Activated CD4-positive, alpha-beta T cell treated with anti-CD3 and anti-CD28 coated beads for 36 hours (primary cell): ENCODE measurements at regions of chr17 and their contacts with region 1.

Region 1: DNA sequence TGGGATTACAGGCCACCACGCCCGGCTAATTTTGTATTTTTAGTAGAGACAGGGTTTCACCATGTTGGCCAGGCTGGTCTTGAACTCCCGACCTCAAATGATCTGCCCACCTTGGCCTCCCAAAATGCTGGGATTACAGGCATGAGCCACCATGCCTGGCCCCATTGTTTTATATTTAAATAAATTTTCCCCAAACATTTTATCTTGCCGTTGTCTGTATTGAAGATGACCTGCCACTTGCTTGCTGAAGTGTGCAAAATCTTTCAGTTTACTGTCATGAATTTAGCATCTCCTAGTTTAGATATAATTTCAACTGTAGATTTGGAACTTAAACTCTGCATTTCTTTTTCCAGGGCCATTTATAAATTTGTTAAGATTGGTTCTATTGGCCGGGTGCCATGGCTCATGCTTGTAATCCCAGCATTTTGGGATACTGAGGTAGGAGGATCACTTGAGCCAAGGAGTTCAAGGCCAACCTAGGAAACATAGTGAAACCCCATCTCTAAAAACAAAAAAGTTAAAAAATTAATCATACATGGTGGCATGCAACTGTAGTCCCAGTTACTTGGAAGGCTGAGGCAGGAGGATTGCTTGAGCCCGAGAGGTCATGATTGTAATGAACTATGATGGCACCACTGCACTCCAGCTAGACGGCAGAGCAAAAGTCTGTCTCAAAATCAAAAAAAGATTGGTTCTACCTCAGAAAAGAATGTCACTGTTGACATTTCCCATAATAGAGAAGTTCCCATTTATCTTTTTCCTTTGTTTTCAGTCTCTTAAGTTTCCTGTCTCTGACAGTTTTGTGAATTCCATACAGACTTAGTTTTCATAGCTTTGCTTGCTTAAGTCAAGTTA is 84.4 kb downstream of the VMP1 start:
- DNase-seq: no peak
- ATAC-seq: no peak
- H3K4me3 Mint-ChIP-seq: no peak overlapping the region
- H3K27ac Mint-ChIP-seq: peak overlapping the region; percentile 51
- H3K4me1 Mint-ChIP-seq: peaks cover 54% of the 10 kb centered on the region
- H3K27me3 Mint-ChIP-seq: no peaks in the 10 kb centered on the region

Region 2: GRCh38 chr17:59506894-59507726 is 284.7 kb before region 1 on chr17:
- CTCF ChIA-PET with region 1: no interaction called
- POLR2A ChIA-PET with region 1: no interaction called
- intact Hi-C with region 1: no loop called
- DNase-seq: no peak
- ATAC-seq: no peak
- H3K4me3 Mint-ChIP-seq: no peak overlapping the region
- H3K27ac Mint-ChIP-seq: no peak overlapping the region
- H3K4me1 Mint-ChIP-seq: no peaks in the 10 kb centered on the region
- H3K27me3 Mint-ChIP-seq: peaks cover 3% of the 10 kb centered on the region

Region 3: GRCh38 chr17:59547131-59547915 is 244.5 kb before region 1 on chr17:
- CTCF ChIA-PET with region 1: no interaction called
- POLR2A ChIA-PET with region 1: no interaction called
- intact Hi-C with region 1: no loop called
- DNase-seq: no peak
- ATAC-seq: no peak
- H3K4me3 Mint-ChIP-seq: no peak overlapping the region
- H3K27ac Mint-ChIP-seq: no peak overlapping the region
- H3K4me1 Mint-ChIP-seq: no peaks in the 10 kb centered on the region
- H3K27me3 Mint-ChIP-seq: peaks cover 6% of the 10 kb centered on the region

Region 4: DNA sequence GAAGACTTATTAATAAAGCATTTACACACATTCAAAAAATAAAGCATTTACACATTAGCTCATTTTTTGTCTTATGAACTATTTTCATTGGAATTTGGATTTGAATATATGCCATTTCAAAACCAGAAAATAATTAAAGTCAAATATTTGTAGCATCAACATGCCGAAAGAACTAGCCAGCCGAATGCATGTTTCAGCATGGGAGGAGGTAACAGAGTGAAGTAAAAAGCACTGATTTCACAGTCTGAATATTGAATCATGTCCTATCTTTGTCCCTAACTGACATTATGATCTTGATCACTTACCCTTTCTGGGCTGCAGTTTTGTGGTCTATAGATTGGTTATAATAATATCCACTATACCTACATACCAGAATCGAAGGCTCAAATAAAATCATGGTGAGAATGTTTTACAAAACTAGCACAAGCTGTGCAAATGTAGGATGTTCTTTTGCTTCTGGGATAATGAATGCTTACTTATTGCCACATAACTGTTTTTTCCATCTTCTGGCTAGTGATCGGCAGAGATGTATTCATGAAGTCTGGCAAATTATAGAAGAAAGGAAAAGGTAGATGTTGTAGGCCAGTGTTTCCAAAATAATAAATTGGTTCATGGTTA is 16.2 kb after region 1 on chr17:
- CTCF ChIA-PET with region 1: no interaction called
- POLR2A ChIA-PET with region 1: no interaction called
- intact Hi-C with region 1: loop called in 1 of 2 experiments (anchors 2 kb)
- DNase-seq: no peak
- ATAC-seq: no peak
- H3K4me3 Mint-ChIP-seq: no peak overlapping the region
- H3K27ac Mint-ChIP-seq: no peak overlapping the region
- H3K4me1 Mint-ChIP-seq: peaks cover 10% of the 10 kb centered on the region
- H3K27me3 Mint-ChIP-seq: no peaks in the 10 kb centered on the region